Activated CD4-positive, alpha-beta T cell treated with anti-CD3 and anti-CD28 coated beads for 36 hours (primary cell): ENCODE measurements at regions of chr1 and their contacts with region 1.

Region 1: DNA sequence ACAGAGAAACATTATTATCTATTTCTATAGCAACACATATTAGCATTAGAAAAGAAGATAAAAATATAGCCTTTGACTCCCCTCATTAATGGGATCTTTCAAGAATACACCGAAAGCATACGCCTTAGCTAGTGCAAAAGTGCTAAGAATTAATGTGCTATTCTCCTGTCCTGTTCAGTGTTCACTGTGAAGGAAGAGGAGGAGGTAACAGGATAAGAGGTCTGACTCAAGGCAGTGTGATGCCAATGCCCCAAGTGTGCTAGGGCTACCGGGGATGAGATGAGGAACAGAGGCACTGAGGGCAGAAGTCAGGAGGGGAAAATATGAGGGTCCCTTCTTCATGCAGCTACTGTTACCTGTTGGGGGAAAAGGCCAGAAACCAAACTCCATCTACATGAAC is 43.5 kb downstream of the USP24 start:
- DNase-seq: no peak
- ATAC-seq: no peak
- H3K4me3 Mint-ChIP-seq: no peak overlapping the region
- H3K27ac Mint-ChIP-seq: no peak overlapping the region
- H3K4me1 Mint-ChIP-seq: peaks cover 36% of the 10 kb centered on the region
- H3K27me3 Mint-ChIP-seq: no peaks in the 10 kb centered on the region

Region 2: GRCh38 chr1:55127827-55128343 is 43.8 kb before region 1 on chr1:
- CTCF ChIA-PET with region 1: no interaction called
- POLR2A ChIA-PET with region 1: no interaction called
- intact Hi-C with region 1: loop called in 1 of 2 experiments (anchors 1 kb)
- DNase-seq: peak; percentile 26
- ATAC-seq: peak; percentile 92
- H3K4me3 Mint-ChIP-seq: no peak overlapping the region
- H3K27ac Mint-ChIP-seq: peak overlapping the region; percentile 76
- H3K4me1 Mint-ChIP-seq: peaks cover 30% of the 10 kb centered on the region
- H3K27me3 Mint-ChIP-seq: no peaks in the 10 kb centered on the region

Region 3: GRCh38 chr1:55185832-55186231 is 14.1 kb after region 1 on chr1:
- CTCF ChIA-PET with region 1: interaction called, 5 read pairs
- POLR2A ChIA-PET with region 1: no interaction called
- intact Hi-C with region 1: loop called in 1 of 2 experiments (anchors 2 kb)
- DNase-seq: no peak
- ATAC-seq: peak; percentile 39
- H3K4me3 Mint-ChIP-seq: no peak overlapping the region
- H3K27ac Mint-ChIP-seq: peak overlapping the region; percentile 59
- H3K4me1 Mint-ChIP-seq: peaks cover 54% of the 10 kb centered on the region
- H3K27me3 Mint-ChIP-seq: no peaks in the 10 kb centered on the region